ENCODE measurements at regions of chrX and their contacts with region 1.

Region 1: GRCh38 chrX:20530406-20530921 is 263.8 kb upstream of the RPS6KA3 start:
- DNase-seq: peak in 1 of 2 donors; percentile 55
- ATAC-seq: peak; percentile 64

Region 2: DNA sequence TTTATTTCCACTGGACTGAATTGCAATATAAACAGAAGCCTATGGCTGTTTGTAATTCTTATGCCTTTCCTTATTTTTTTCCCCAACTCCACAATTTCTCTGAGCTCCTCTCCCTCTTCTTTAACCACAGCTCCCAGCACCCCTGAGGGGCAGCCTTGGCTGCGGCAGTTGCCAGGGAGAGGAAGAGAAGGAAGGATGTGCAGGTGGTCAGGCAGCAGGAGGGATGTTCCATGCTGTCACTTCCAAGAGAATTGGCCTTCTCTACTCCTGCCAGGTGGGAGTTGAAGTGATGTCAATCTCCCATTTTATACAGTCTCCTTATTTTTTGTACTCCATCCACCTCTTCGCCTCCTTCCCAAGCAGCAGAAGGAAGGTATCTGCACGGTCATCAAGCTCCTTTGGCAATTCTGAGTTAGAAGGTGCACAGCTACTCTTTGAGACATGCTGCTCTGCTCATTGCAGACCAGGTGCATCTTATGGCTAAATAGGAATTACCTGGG is 79.5 kb after region 1 on chrX:
- intact Hi-C with region 1: no loop called
- DNase-seq: no peak
- ATAC-seq: no peak

Region 3: GRCh38 chrX:21479695-21480270 is 949.3 kb after region 1 on chrX:
- intact Hi-C with region 1: loop called in 1 of 2 experiments (anchors 5 kb)
- DNase-seq: no peak
- ATAC-seq: peak; percentile 64

Region 4: DNA sequence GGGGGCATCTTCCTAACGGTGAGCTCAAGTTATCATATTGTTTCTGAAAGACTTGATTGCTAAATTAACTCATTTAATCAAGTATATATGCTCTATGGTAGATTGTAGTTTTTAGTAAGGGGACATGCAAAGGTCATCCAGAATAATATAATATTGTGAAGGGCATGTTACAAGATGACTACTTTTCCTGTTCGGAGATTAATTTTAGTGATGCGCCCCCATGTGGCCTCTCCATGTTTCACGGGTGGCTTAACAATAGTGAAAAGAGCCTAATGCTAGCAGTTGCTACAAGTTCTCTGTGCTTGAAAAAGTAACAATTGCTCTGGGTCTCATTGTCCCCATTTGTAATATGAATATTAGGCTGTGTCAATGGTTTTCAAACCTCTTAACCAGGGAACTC is 1215.3 kb after region 1 on chrX:
- intact Hi-C with region 1: loop called in 1 of 2 experiments (anchors 10 kb)
- DNase-seq: peak in 1 of 2 donors; percentile 63
- ATAC-seq: peak; percentile 32